Activated CD4-positive, alpha-beta memory T cell treated with anti-CD3 and anti-CD28 coated beads for 36 hours (primary cell): ENCODE measurements at regions of chr7 and their contacts with region 1.

Region 1: GRCh38 chr7:5494683-5495561 is 71.3 kb upstream of the TNRC18 start:
- DNase-seq: peak; percentile 87
- H3K4me3 Mint-ChIP-seq: no peak overlapping the region
- H3K27ac Mint-ChIP-seq: no peak overlapping the region
- H3K4me1 Mint-ChIP-seq: peaks cover 9% of the 10 kb centered on the region
- H3K27me3 Mint-ChIP-seq: no peaks in the 10 kb centered on the region

Region 2: GRCh38 chr7:5396999-5397663 is 97.8 kb before region 1 on chr7:
- CTCF ChIA-PET with region 1: interaction called, 10 read pairs
- POLR2A ChIA-PET with region 1: no interaction called
- intact Hi-C with region 1: no loop called
- DNase-seq: peak; percentile 95
- H3K4me3 Mint-ChIP-seq: peak overlapping the region; percentile 80
- H3K27ac Mint-ChIP-seq: peak overlapping the region; percentile 96
- H3K4me1 Mint-ChIP-seq: peaks cover 35% of the 10 kb centered on the region
- H3K27me3 Mint-ChIP-seq: no peaks in the 10 kb centered on the region

Region 3: DNA sequence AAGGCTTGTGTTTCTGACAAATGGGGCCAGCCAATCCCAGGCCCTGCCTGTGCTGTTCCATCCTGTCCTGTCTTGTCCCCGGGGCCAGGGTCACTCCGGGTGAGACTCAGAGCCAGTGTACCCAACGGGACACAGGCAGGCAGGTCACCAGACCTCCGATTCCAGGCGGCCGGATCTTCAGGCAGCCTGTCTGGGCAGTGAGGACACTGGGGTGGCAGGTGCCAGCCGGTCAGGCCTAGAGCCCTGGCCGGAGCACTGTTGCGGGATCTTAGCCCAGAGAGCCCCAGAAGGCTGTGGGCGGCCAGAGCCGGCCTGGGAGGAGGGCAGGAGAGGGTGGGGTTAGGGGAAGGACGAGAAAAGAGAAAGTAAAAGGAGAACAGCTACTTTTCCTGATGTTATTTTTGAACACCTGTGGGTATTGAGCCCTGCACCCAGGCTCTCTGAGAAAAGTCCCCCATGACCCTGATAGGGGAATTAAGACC is 63.0 kb after region 1 on chr7:
- CTCF ChIA-PET with region 1: interaction called, 8 read pairs
- POLR2A ChIA-PET with region 1: interaction called, 7 read pairs
- intact Hi-C with region 1: loop called (anchors 1 kb)
- DNase-seq: no peak
- H3K4me3 Mint-ChIP-seq: peak overlapping the region; percentile 58
- H3K27ac Mint-ChIP-seq: peak overlapping the region; percentile 85
- H3K4me1 Mint-ChIP-seq: peaks cover 40% of the 10 kb centered on the region
- H3K27me3 Mint-ChIP-seq: no peaks in the 10 kb centered on the region

Region 4: GRCh38 chr7:5665094-5666025 is 170.4 kb after region 1 on chr7:
- CTCF ChIA-PET with region 1: interaction called, 73 read pairs
- POLR2A ChIA-PET with region 1: interaction called, 3 read pairs
- intact Hi-C with region 1: loop called (anchors 1 kb)
- DNase-seq: peak; percentile 73
- H3K4me3 Mint-ChIP-seq: no peak overlapping the region
- H3K27ac Mint-ChIP-seq: peak overlapping the region; percentile 49
- H3K4me1 Mint-ChIP-seq: peaks cover 17% of the 10 kb centered on the region
- H3K27me3 Mint-ChIP-seq: no peaks in the 10 kb centered on the region

Region 5: DNA sequence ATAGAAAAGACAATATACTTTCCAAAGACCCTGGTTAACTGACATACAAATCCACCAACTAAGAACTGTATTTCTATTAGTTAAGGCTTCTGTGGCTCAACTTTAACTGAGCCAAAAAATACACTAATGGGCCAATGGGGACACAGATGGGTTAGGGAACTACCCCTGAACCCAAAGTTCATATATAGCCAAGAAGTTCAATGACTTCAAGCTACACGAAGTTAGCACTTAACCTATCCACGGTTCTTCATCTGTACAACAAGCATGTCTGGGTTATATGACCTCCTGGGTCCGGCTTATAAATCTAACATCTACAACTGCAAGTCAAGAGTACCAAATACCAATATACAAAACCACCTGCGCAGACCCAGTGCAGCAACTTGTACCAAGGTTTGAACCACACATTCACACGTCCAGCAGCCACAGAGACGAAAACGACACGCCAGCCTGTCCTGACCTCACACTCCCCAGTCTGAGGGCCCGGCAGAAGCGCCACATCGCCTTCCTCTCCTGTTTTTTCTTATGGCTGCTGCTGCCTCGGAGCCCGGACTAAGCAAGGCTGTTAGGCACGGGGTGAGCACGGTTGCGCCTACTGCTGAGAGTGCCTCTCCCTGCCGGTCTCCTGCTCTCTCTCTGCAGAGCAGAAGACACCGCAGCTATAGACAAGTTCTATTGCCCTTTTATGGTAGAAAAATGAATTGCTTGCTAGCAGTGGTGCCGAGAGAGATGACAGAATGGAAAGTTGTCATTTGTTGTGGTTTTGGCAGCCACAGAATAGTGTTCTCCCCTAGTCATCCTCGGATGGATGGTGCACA is 200.2 kb after region 1 on chr7:
- CTCF ChIA-PET with region 1: interaction called, 13 read pairs
- POLR2A ChIA-PET with region 1: no interaction called
- intact Hi-C with region 1: no loop called
- DNase-seq: peak; percentile 87
- H3K4me3 Mint-ChIP-seq: peak overlapping the region; percentile 80
- H3K27ac Mint-ChIP-seq: peak overlapping the region; percentile 90
- H3K4me1 Mint-ChIP-seq: peaks cover 98% of the 10 kb centered on the region
- H3K27me3 Mint-ChIP-seq: no peaks in the 10 kb centered on the region